Activated T-helper 1 cell treated with anti-CD3 and anti-CD28 coated beads, Interleukin-12 subunit alpha, Interleukin-12 subunit beta, Interleukin-2, Interleukin-4 antibody, amounts not matched to agents 30 ng/mL and 10 ng/mL and 1 ng/mL, durations not matched to agents 14 hours and 24 hours and 36 hours (primary cell): ENCODE measurements at regions of chr2 and their contacts with region 1.

Region 1: GRCh38 chr2:28469304-28469703 is 26.6 kb upstream of the PLB1 start:
- DNase-seq: no peak
- H3K4me3 Mint-ChIP-seq: no peak overlapping the region
- H3K27ac Mint-ChIP-seq: no peak overlapping the region
- H3K4me1 Mint-ChIP-seq: peaks cover 44% of the 10 kb centered on the region
- H3K27me3 Mint-ChIP-seq: peaks cover 7% of the 10 kb centered on the region

Region 2: GRCh38 chr2:27628767-27629709 is 840.3 kb before region 1 on chr2 and contains the starts of genes CCDC121 and GPN1:
- intact Hi-C with region 1: loop called (anchors 1 kb)
- DNase-seq: peak; percentile 93
- H3K4me3 Mint-ChIP-seq: no peak within 1 kb of the TSS
- H3K27ac Mint-ChIP-seq: peak within 1 kb of the TSS; percentile 73
- H3K4me1 Mint-ChIP-seq: peaks cover 20% of the 10 kb centered on the region
- H3K27me3 Mint-ChIP-seq: no peaks in the 10 kb centered on the region
- total RNA-seq, gene CCDC121: 0.66 and 1.3 TPM in 2 replicates
- total RNA-seq, gene GPN1: 48.3 and 51.0 TPM in 2 replicates

Region 3: DNA sequence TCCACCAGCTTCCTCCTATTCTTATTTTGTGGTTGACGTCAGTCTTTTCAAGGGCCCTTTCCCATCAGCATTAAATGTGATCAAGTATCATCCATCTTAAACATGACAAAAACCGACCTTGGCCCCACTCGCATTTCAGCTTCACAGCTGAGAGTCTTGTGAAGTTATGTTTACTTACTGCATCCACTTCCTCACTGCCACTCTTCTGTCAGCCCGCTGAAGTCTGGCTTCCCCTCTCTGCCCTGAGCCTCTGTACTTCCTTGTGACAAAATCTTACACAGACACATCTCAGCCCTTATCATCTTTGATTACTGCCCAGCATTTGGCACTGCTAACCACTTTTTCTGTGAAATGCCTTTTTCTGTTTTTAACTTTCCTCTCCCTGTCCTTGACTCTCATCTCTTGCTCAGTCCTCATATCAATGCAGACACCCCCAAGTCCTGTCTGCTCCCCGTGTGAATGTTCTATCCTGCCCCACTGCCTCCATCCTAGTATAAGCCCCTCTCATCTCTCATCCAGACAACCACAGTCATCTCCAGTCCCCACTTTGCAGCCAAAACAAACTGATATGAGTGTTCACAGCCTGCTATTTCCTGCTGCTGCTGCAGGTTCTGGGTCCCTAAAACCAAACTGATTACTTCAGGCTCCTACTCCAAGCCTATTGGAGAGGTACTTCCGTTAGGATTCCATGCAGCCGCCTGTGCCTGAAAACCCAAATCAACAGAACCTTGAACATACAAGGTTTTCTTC is 45.3 kb before region 1 on chr2:
- intact Hi-C with region 1: loop called (anchors 1 kb)
- DNase-seq: no peak
- H3K4me3 Mint-ChIP-seq: peak overlapping the region; percentile 34
- H3K27ac Mint-ChIP-seq: peak overlapping the region; percentile 85
- H3K4me1 Mint-ChIP-seq: peaks cover 45% of the 10 kb centered on the region
- H3K27me3 Mint-ChIP-seq: no peaks in the 10 kb centered on the region

Region 4: GRCh38 chr2:28445448-28446258 is 23.7 kb before region 1 on chr2:
- intact Hi-C with region 1: loop called (anchors 1 kb)
- DNase-seq: no peak
- H3K4me3 Mint-ChIP-seq: peak overlapping the region; percentile 40
- H3K27ac Mint-ChIP-seq: peak overlapping the region; percentile 82
- H3K4me1 Mint-ChIP-seq: peaks cover 78% of the 10 kb centered on the region
- H3K27me3 Mint-ChIP-seq: no peaks in the 10 kb centered on the region

Region 5: DNA sequence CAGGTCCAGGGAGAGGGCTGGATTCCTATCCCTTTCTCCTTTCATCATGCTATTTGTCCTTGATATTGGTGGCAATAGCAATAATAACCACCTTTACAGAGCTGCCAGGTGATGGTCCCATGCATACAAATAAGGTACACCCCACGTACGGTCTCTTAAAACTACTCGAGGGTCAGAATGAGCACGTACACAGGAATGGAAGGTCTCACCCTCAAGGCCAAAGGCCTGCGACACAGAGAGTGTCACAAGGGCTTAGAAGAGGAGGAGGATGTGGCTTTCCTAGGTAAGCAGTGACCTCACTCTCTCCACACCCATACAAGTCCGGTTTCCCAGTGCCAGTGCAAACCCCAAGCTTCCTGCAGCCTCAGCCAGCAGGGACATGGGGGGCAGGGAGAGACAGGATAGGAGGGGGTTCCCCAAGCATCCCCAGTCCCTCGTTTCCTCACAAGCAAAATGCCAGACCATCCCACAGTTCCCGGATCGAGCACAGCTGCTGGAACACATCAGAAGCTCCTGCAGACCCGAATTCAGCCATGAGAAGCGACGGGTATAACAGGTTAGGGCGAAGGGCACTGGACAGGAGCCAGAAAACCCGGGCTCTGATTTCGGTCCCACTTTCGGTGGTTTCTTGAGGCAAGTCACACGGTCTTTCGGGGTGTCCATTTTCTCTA is 75.8 kb after region 1 on chr2:
- intact Hi-C with region 1: loop called (anchors 5 kb)
- DNase-seq: peak; percentile 37
- H3K4me3 Mint-ChIP-seq: peak overlapping the region; percentile 46
- H3K27ac Mint-ChIP-seq: peak overlapping the region; percentile 73
- H3K4me1 Mint-ChIP-seq: peaks cover 31% of the 10 kb centered on the region
- H3K27me3 Mint-ChIP-seq: peaks cover 1% of the 10 kb centered on the region

Region 6: DNA sequence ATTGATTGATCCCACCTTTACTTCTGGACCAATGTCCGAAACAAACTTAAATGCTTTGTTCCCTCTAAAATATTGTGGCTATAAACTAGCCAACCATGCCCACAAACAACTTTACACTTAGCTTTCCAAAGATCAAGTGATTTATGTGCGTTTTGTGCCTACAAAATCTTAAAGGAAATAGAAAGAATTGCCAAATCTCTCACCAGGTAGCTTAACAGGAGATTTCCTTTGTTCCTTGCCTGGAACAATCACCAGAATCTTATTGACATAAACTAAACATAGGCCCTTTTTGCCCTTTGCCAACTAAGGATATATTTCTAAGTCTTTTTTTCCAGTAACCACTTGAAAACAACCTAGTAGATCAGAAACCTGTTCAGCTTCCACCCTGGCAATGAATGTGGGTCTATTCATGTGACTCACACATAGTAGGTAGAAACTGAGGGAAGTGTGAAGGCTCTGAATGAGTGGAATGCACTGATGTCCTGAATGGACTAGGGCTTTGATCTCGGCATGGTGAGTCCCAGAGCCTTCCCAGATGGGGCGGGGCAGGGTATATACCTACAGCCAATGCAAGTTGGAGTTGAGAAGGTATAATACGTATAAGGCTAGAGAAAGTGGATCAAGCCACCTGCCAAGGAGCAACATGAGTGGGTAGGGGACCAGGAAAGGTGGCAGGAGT is 187.8 kb after region 1 on chr2:
- intact Hi-C with region 1: loop called (anchors 1 kb)
- DNase-seq: no peak
- H3K4me3 Mint-ChIP-seq: no peak overlapping the region
- H3K27ac Mint-ChIP-seq: peak overlapping the region; percentile 57
- H3K4me1 Mint-ChIP-seq: peaks cover 54% of the 10 kb centered on the region
- H3K27me3 Mint-ChIP-seq: peaks cover 6% of the 10 kb centered on the region

Region 7: GRCh38 chr2:28751252-28751955 is 282.1 kb after region 1 on chr2 and contains the start of gene PPP1CB:
- intact Hi-C with region 1: no loop called
- DNase-seq: peak; percentile 98
- H3K4me3 Mint-ChIP-seq: peak within 1 kb of the TSS; percentile 95
- H3K27ac Mint-ChIP-seq: peak within 1 kb of the TSS; percentile 96
- H3K4me1 Mint-ChIP-seq: peaks cover 62% of the 10 kb centered on the region
- H3K27me3 Mint-ChIP-seq: no peaks in the 10 kb centered on the region
- total RNA-seq, gene PPP1CB: 262 and 268 TPM in 2 replicates